ENCODE measurements at regions of chr16 and their contacts with region 1.

Region 1: GRCh38 chr16:72832621-72833248 is 215.2 kb downstream of the ZFHX3 start:
- DNase-seq: peak; percentile 82 to 93 (median 92)
- ATAC-seq: peak; percentile 89 to 93
- H3K4me3 ChIP-seq: no peak overlapping the region
- H3K27ac ChIP-seq: no peak overlapping the region
- H3K4me1 ChIP-seq: no peaks in the 10 kb centered on the region
- H3K27me3 ChIP-seq: no peaks in the 10 kb centered on the region

Region 2: DNA sequence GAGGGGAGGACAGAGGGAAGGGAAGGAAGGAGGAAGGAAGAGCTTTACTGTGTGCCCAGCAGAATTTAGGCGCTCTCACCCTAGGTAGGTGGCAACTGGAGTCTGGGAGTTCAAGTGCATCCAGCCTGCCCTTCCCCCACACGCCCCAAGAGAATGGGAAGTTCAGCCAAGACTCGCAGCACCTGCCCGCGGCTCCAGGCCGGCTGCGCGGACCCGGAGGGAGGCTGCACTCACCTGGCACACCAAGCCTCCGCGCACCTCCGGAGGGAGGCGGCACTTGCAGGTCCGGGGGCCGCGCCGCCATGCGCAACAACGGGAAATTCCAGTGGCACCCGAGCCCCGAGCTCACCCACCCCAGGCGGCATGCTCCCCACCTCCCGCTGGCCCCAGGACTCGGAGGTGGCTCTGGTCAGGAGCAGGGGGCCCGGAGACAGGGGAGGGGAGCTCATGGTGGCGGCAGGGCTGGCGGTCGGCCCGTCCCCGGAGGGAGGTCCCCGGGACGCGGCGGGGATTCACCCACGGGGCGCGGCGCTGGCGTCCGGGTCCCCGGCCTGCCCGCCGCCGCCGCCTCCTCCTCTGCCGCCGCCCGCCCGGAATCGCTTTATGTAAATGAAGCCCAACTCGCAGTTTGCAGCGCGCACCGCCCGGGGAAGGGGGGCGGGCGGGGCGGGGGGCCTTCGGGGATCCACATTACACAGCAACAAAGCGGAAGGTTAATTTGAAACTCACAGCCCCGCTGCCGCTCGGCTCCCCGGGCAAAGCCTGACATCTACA is 215.0 kb after region 1 on chr16 and contains the start of gene ZFHX3:
- intact Hi-C with region 1: loop called in 3 of 4 experiments (anchors 5 to 10 kb)
- DNase-seq: peak; percentile 77 to 90 (median 90)
- ATAC-seq: peak; percentile 78 to 81
- H3K4me3 ChIP-seq: peak within 1 kb of the TSS; percentile 75
- H3K27ac ChIP-seq: peak within 1 kb of the TSS; percentile 97
- H3K4me1 ChIP-seq: peaks cover 16% of the 10 kb centered on the region
- H3K27me3 ChIP-seq: no peaks in the 10 kb centered on the region
- total RNA-seq, gene ZFHX3: 9.1 to 18.2 (median 11.0) TPM

Region 3: GRCh38 chr16:73196670-73197069 is 363.9 kb after region 1 on chr16:
- intact Hi-C with region 1: loop called in 3 of 4 experiments (anchors 5 to 10 kb)
- DNase-seq: peak; percentile 70 to 88 (median 71)
- ATAC-seq: peak; percentile 87 to 89
- H3K4me3 ChIP-seq: no peak overlapping the region
- H3K27ac ChIP-seq: no peak overlapping the region
- H3K4me1 ChIP-seq: no peaks in the 10 kb centered on the region
- H3K27me3 ChIP-seq: no peaks in the 10 kb centered on the region